ENCODE measurements at regions of chr1 and their contacts with region 1.

Region 1: DNA sequence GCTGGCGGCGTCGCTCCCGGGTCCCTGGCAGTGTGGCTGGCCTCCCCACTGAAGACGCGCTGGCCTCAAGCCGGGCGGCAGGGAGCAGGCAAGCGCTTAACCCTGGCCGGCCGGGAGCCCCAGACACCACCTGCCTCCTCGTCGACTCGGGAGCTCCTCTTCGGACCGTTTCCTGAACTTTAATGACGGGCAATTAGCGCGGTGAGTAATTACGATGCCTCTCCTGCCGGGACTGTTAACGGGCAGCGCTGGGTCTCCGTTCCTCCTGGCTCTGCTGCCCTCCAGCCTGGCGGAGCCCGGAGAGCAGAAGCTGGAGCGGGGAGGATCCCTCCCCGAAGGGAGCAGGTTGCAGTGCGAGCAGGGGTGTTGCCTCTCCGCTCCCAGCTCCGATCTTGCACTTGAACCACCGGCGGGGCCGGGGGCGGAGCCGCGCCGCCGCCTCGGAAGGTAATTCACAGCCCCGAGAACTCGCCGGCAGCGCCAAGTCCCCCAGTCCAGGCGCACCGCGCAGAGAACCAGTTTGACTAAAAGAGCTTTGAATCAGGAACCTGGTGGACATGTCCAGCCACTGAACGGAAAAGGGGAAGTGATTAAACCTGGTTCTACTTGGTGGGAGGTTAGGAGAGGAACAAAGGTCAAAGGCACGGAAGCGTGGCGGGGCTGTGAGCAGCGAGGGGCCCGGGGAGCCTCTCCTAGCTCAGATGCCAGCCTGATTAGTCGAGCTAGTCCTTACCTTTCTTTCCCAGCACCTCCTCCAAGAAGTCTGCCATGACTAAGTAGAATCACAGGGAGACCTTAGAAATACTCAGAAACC is 18.3 kb upstream of the PLEKHA6 start:
- DNase-seq: peak; percentile 81
- ATAC-seq: peak; percentile 87
- H3K4me3 ChIP-seq: peak overlapping the region; percentile 54
- H3K27ac ChIP-seq: peak overlapping the region; percentile 27
- H3K4me1 ChIP-seq: peaks cover 12% of the 10 kb centered on the region
- H3K27me3 ChIP-seq: peaks cover 20% of the 10 kb centered on the region
- CTCF ChIP-seq: no peak

Region 2: GRCh38 chr1:203861379-203862184 is 516.4 kb before region 1 on chr1 and contains the start of gene SNRPE:
- intact Hi-C with region 1: loop called (anchors 10 kb)
- DNase-seq: peak; percentile 97
- ATAC-seq: peak; percentile 100
- H3K4me3 ChIP-seq: peak within 1 kb of the TSS; percentile 100
- H3K27ac ChIP-seq: peak within 1 kb of the TSS; percentile 74
- H3K4me1 ChIP-seq: peaks cover 13% of the 10 kb centered on the region
- H3K27me3 ChIP-seq: no peaks in the 10 kb centered on the region
- CTCF ChIP-seq: peak; percentile 92
- total RNA-seq, gene SNRPE: 58.0 TPM